ENCODE measurements at regions of chr10 and their contacts with region 1.

Region 1: GRCh38 chr10:86889997-86890396 is 67.4 kb downstream of the MMRN2 start:
- DNase-seq: no peak
- ATAC-seq: peak in 1 of 2 donors; percentile 44

Region 2: GRCh38 chr10:86755740-86756510 is 134.1 kb before region 1 on chr10:
- intact Hi-C with region 1: loop called in 1 of 2 experiments (anchors 5 kb)
- DNase-seq: peak; percentile 87
- ATAC-seq: peak; percentile 91 to 93

Region 3: DNA sequence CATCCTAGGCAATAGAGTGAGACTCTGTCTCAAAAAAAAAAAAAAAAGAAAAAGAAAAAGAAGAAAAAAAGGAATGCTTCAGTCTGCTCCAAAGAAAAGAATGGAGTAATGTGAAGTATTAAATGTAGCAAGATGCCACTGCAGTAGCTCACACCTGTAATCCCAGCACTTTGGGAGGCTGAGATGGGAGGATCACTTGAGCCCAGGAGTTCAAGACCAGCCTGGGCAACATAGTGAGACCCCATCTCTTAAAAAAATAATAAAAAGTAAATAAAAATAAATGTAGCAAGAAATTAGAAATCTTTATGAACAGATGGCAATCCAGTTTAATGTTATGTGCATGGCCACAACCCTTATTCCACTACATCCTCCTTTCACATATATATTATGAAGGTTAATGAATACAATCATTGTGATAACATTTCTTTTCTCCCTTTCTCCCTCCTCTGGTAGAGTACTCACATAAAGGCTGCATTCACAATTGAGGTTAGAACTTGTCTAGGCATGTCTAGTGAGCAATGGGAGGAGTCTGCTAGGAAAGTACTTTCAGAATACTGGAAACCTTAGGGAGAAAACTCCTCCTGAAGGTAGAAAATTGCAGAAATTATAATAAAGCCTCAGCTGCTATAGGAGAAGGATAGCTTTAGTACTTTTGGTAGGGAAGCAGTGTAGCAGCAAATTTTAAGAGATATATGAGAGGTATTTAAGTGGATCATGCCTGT is 952.9 kb after region 1 on chr10:
- intact Hi-C with region 1: no loop called
- DNase-seq: no peak
- ATAC-seq: no peak

Measured in left cardiac atrium (tissue), 4 donors.